ENCODE measurements at regions of chr2 and their contacts with region 1.

Region 1: GRCh38 chr2:148989882-148990493 is 48.5 kb upstream of the LYPD6B start:
- DNase-seq: peak; percentile 23 to 78
- ATAC-seq: peak; percentile 70 to 97 (median 93)
- H3K4me3 ChIP-seq: no peak overlapping the region
- H3K4me3 Mint-ChIP-seq: no peak overlapping the region
- H3K27ac ChIP-seq: no peak overlapping the region
- H3K27ac Mint-ChIP-seq: no peak overlapping the region
- H3K4me1 ChIP-seq: no peaks in the 10 kb centered on the region
- H3K4me1 Mint-ChIP-seq: peaks cover 5% of the 10 kb centered on the region in 2 donors
- H3K27me3 ChIP-seq: no peaks in the 10 kb centered on the region
- H3K27me3 Mint-ChIP-seq: peaks cover 2 to 5% of the 10 kb centered on the region in 2 donors
- CTCF ChIP-seq: peak; percentile 65

Region 2: GRCh38 chr2:147937744-147938349 is 1052.1 kb before region 1 on chr2:
- intact Hi-C with region 1: loop called (anchors 1 kb)
- DNase-seq: peak in 1 of 2 donors; percentile 60
- ATAC-seq: peak in 2 of 3 donors; percentile 71 to 74
- H3K4me3 ChIP-seq: no peak overlapping the region
- H3K4me3 Mint-ChIP-seq: no peak overlapping the region
- H3K27ac ChIP-seq: no peak overlapping the region
- H3K27ac Mint-ChIP-seq: no peak overlapping the region
- H3K4me1 ChIP-seq: no peaks in the 10 kb centered on the region
- H3K4me1 Mint-ChIP-seq: no peaks in the 10 kb centered on the region
- H3K27me3 ChIP-seq: no peaks in the 10 kb centered on the region
- H3K27me3 Mint-ChIP-seq: no peaks in the 10 kb centered on the region
- CTCF ChIP-seq: peak; percentile 99

Region 3: GRCh38 chr2:147989809-147990403 is 1000.1 kb before region 1 on chr2:
- intact Hi-C with region 1: loop called (anchors 1 kb)
- DNase-seq: peak in 1 of 2 donors; percentile 71
- ATAC-seq: peak; percentile 70 to 94 (median 84)
- H3K4me3 ChIP-seq: no peak overlapping the region
- H3K4me3 Mint-ChIP-seq: no peak overlapping the region
- H3K27ac ChIP-seq: no peak overlapping the region
- H3K27ac Mint-ChIP-seq: peak overlapping the region; percentile 48 to 68
- H3K4me1 ChIP-seq: no peaks in the 10 kb centered on the region
- H3K4me1 Mint-ChIP-seq: peaks cover 24 to 42% of the 10 kb centered on the region in 2 donors
- H3K27me3 ChIP-seq: no peaks in the 10 kb centered on the region
- H3K27me3 Mint-ChIP-seq: no peaks in the 10 kb centered on the region
- CTCF ChIP-seq: peak; percentile 67

Region 4: GRCh38 chr2:148509288-148509902 is 480.6 kb before region 1 on chr2:
- intact Hi-C with region 1: loop called (anchors 10 kb)
- DNase-seq: peak; percentile 67 to 89
- ATAC-seq: peak; percentile 97 to 100 (median 100)
- H3K4me3 ChIP-seq: peak overlapping the region; percentile 8
- H3K4me3 Mint-ChIP-seq: peak overlapping the region; percentile 49
- H3K27ac ChIP-seq: no peak overlapping the region
- H3K27ac Mint-ChIP-seq: peak overlapping the region in 1 of 2 donors; percentile 51
- H3K4me1 ChIP-seq: peaks cover 5% of the 10 kb centered on the region
- H3K4me1 Mint-ChIP-seq: peaks cover 8 to 10% of the 10 kb centered on the region in 2 donors
- H3K27me3 ChIP-seq: no peaks in the 10 kb centered on the region
- H3K27me3 Mint-ChIP-seq: no peaks in the 10 kb centered on the region
- CTCF ChIP-seq: peak; percentile 78

Region 5: DNA sequence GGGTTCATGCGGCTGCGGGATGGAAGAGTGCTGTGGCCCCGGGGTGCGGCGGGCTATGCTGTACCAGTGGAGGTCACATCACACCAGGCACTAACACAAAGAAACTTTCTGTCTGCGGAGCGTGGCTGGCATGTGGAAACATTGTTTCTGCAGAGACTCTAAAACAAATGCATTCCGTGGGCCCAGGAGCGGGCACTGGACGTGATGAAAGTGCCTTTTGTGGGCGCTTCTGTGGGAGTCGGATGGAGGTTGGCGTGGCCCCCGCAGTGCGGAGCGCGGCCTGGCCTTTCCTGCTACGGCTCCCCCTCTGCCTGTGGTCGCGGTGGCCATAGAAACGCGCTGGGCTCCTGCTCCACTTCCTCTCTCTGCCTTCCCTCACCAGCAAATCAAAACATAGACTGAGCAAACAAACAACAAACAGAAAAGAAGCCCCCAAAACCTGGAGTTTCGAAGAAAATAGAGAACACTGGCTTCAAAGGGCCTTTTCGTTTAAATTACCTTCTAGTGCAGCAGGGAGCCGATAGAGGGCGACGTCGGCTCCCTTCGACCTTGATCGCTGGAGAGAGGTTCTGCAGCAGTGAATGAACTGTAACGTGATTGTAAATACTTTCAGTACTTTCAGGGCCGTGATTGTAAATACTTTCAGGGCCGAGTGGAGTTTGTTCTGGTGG is 63.6 kb before region 1 on chr2:
- intact Hi-C with region 1: loop called (anchors 1 kb)
- DNase-seq: peak; percentile 33 to 75
- ATAC-seq: peak; percentile 86 to 91 (median 90)
- H3K4me3 ChIP-seq: peak overlapping the region; percentile 9
- H3K4me3 Mint-ChIP-seq: peak overlapping the region; percentile 90
- H3K27ac ChIP-seq: peak overlapping the region; percentile 23
- H3K27ac Mint-ChIP-seq: peak overlapping the region; percentile 69 to 86
- H3K4me1 ChIP-seq: peaks cover 18% of the 10 kb centered on the region
- H3K4me1 Mint-ChIP-seq: peaks cover 18 to 19% of the 10 kb centered on the region in 2 donors
- H3K27me3 ChIP-seq: no peaks in the 10 kb centered on the region
- H3K27me3 Mint-ChIP-seq: no peaks in the 10 kb centered on the region
- CTCF ChIP-seq: peak; percentile 66